CD4-positive, alpha-beta memory T cell (primary cell): ENCODE measurements at regions of chr12 and their contacts with region 1.

Region 1: GRCh38 chr12:94532490-94533422 is 73.1 kb upstream of the CEP83 start:
- DNase-seq: peak; percentile 48 to 64 (median 56)
- H3K4me3 ChIP-seq: no peak overlapping the region
- H3K4me3 Mint-ChIP-seq: no peak overlapping the region
- H3K27ac ChIP-seq: no peak overlapping the region
- H3K27ac Mint-ChIP-seq: no peak overlapping the region
- H3K4me1 ChIP-seq: no peaks in the 10 kb centered on the region
- H3K4me1 Mint-ChIP-seq: peaks cover 0 to 5% (median 3%) of the 10 kb centered on the region in 4 donors
- H3K27me3 ChIP-seq: no peaks in the 10 kb centered on the region
- H3K27me3 Mint-ChIP-seq: peaks cover 2 to 18% of the 10 kb centered on the region in 2 donors

Region 2: DNA sequence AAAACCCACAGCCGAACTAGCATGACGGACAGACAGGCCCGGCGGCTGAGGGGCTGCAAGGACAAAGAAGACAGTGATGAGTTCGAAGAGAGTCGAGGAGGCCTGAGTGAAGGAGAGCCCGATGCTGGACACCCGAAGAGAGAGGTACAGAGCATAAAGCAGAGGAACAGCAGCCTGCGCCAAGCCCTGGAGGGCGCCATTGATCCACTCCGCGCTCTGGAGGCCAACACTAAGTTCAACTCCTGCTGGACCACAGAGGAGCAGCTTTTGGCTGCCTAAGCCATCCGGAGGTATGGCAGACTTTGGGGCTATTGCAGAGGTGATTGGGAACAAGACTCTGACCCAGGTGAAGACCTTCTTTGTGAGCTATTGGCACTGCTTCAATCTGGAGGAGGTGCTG is 392.2 kb before region 1 on chr12:
- CTCF ChIA-PET with region 1: interaction called, 39 read pairs
- POLR2A ChIA-PET with region 1: no interaction called
- intact Hi-C with region 1: loop called (anchors 1 kb)
- DNase-seq: peak in 4 of 5 donors; percentile 37 to 47 (median 42)
- H3K4me3 ChIP-seq: no peak overlapping the region
- H3K4me3 Mint-ChIP-seq: no peak overlapping the region
- H3K27ac ChIP-seq: no peak overlapping the region
- H3K27ac Mint-ChIP-seq: peak overlapping the region in 1 of 7 donors; percentile 41
- H3K4me1 ChIP-seq: no peaks in the 10 kb centered on the region
- H3K4me1 Mint-ChIP-seq: peaks cover 0 to 3% (median under 1%) of the 10 kb centered on the region in 4 donors
- H3K27me3 ChIP-seq: no peaks in the 10 kb centered on the region
- H3K27me3 Mint-ChIP-seq: no peaks in the 10 kb centered on the region

Region 3: DNA sequence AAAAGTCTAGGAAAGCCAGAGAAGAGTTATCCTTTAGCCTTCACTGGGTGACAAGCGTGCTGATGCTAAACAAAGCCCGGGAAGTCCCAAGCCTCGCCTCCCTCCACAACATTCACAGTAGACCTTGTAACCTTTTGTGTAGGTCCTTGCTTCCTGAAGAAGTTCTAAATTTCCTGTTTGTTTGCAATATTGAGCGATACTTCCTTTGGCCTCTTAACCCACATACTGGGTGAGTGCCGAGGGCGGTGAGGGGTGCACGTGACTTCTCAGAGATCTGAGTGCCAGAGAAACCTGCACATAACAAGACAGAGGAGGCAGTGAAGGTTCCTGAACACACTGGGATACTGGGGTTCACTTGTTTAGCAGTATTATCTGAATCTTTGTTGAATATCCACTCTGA is 250.1 kb before region 1 on chr12:
- CTCF ChIA-PET with region 1: no interaction called
- POLR2A ChIA-PET with region 1: no interaction called
- intact Hi-C with region 1: loop called (anchors 5 kb)
- DNase-seq: peak; percentile 57 to 71 (median 66)
- H3K4me3 ChIP-seq: peak overlapping the region; percentile 5 to 17
- H3K4me3 Mint-ChIP-seq: peak overlapping the region; percentile 16 to 86 (median 78)
- H3K27ac ChIP-seq: peak overlapping the region; percentile 47
- H3K27ac Mint-ChIP-seq: peak overlapping the region; percentile 85 to 96 (median 94)
- H3K4me1 ChIP-seq: peaks cover 27% of the 10 kb centered on the region
- H3K4me1 Mint-ChIP-seq: peaks cover 30 to 33% (median 32%) of the 10 kb centered on the region in 4 donors
- H3K27me3 ChIP-seq: no peaks in the 10 kb centered on the region
- H3K27me3 Mint-ChIP-seq: no peaks in the 10 kb centered on the region

Region 4: DNA sequence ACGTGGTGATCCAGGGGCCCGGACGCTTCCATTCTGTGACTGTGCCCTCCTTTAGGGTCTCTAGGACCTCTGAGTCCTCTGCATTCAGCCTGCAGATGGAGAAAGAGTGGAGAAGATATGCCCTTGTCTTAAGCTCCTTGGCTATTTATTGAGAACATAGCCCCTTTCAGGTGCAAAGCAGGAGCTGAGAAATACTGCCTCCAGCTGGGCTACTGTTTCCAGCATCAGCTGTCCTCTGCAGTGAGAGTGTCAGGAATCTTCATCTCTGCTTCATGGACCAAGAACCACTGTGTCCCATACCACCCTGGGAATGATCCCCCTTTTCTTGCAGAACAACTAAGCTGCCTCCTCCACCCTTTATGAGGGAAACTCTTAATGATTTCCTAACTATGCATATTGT is 25.3 kb before region 1 on chr12:
- CTCF ChIA-PET with region 1: no interaction called
- POLR2A ChIA-PET with region 1: no interaction called
- intact Hi-C with region 1: no loop called
- DNase-seq: no peak
- H3K4me3 ChIP-seq: no peak overlapping the region
- H3K4me3 Mint-ChIP-seq: no peak overlapping the region
- H3K27ac ChIP-seq: no peak overlapping the region
- H3K27ac Mint-ChIP-seq: no peak overlapping the region
- H3K4me1 ChIP-seq: no peaks in the 10 kb centered on the region
- H3K4me1 Mint-ChIP-seq: no peaks in the 10 kb centered on the region
- H3K27me3 ChIP-seq: no peaks in the 10 kb centered on the region
- H3K27me3 Mint-ChIP-seq: peaks cover 0 to 5% of the 10 kb centered on the region in 2 donors

Region 5: DNA sequence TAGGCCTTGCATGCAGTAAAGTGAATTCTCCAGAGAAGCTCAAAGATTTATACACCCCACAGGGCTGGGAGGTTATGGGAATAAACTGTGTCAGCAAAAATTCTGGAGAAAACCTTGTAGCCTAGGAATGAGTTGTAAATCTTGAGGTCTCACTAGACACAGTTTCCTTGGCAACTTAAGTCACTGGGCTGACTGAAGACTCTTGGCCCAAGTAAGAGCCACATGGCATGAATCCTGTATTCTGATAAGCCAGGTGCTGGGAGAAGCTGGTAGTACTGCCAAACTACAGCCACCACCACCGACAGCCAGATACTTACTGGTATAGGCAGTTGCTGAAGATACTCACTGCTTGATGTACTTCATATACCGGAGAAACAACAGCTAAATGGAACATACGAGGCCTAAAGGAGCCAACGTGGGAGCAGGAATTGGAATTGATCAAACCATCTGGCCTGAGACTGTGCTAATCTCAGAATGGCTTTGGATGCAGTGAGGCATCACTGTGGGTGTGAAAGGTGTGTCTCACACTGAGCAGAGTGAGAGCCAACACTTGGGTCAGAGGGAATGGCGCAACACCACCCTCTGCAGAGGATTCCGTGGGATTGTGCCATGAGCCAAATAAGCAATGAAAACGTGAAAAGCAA is 220.4 kb after region 1 on chr12:
- CTCF ChIA-PET with region 1: no interaction called
- POLR2A ChIA-PET with region 1: no interaction called
- intact Hi-C with region 1: no loop called
- DNase-seq: no peak
- H3K4me3 ChIP-seq: no peak overlapping the region
- H3K4me3 Mint-ChIP-seq: no peak overlapping the region
- H3K27ac ChIP-seq: no peak overlapping the region
- H3K27ac Mint-ChIP-seq: peak overlapping the region in 1 of 7 donors; percentile 35
- H3K4me1 ChIP-seq: no peaks in the 10 kb centered on the region
- H3K4me1 Mint-ChIP-seq: no peaks in the 10 kb centered on the region
- H3K27me3 ChIP-seq: no peaks in the 10 kb centered on the region
- H3K27me3 Mint-ChIP-seq: peaks cover 9% of the 10 kb centered on the region in 2 donors